Psoas muscle (tissue), 8 donors: ENCODE measurements at regions of chr18 and their contacts with region 1.

Region 1: GRCh38 chr18:31892936-31893335 is 50.0 kb downstream of the TRAPPC8 start:
- DNase-seq: no peak
- ATAC-seq: no peak
- H3K4me3 ChIP-seq: no peak overlapping the region
- H3K27ac ChIP-seq: no peak overlapping the region
- H3K4me1 ChIP-seq: no peaks in the 10 kb centered on the region
- H3K27me3 ChIP-seq: no peaks in the 10 kb centered on the region
- CTCF ChIP-seq: no peak

Region 2: GRCh38 chr18:31840499-31840898 is 52.4 kb before region 1 on chr18:
- intact Hi-C with region 1: loop called in 1 of 2 experiments (anchors 10 kb)
- DNase-seq: no peak
- ATAC-seq: no peak
- H3K4me3 ChIP-seq: no peak overlapping the region
- H3K27ac ChIP-seq: no peak overlapping the region
- H3K4me1 ChIP-seq: no peaks in the 10 kb centered on the region
- H3K27me3 ChIP-seq: no peaks in the 10 kb centered on the region
- CTCF ChIP-seq: no peak